ENCODE measurements at regions of chr10 and their contacts with region 1.

Region 1: GRCh38 chr10:116774728-116775151 is 32.4 kb upstream of the HSPA12A start:
- DNase-seq: no peak
- H3K4me3 ChIP-seq: no peak overlapping the region
- CTCF ChIP-seq: no peak

Region 2: DNA sequence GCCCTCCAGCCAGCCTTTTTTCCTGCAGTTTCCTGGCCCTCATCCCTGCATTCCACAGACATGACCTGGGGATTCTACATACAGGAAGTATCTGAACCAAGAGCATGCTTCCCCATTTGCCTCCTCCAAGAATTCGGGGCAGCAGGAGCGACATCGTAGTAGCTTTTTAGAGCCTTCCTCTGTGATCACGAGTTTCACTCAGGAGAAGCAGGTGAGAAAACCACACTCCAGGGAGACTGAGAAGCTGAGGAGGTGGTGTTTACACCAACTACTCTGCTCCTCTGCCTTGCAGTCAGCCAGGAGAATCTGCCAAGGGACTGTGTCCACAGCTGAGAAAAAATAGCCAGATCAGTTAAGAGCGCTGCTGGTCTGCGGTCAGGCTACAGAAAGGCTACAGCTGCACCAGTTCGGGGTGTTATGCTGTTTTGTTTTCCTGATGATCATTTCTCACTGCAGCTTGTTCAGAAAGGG is 86.5 kb before region 1 on chr10:
- in situ Hi-C with region 1: loop called (anchors 5 kb)
- DNase-seq: no peak
- H3K4me3 ChIP-seq: no peak overlapping the region
- CTCF ChIP-seq: no peak

Region 3: DNA sequence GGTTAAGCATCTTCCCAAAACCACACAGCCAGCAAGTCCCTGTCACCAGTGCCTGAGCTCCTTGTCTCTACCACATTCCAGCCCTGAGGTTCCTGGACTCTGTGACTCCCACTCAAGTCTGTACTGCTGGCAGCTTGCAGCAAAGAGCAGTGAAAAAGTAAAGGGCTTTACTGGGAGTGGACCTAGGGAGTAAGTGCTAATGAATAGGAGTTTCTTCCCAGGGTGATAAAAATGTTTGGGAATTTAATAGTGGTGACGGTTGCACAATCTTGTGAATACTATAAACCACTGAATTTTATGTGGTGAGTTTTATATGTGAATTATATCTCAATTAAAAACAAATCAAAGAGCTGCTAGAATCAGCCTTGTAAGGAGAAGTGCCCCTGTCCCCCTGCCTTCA is 54.9 kb before region 1 on chr10:
- in situ Hi-C with region 1: loop called (anchors 5 kb)
- DNase-seq: no peak
- H3K4me3 ChIP-seq: no peak overlapping the region
- CTCF ChIP-seq: no peak

Measured in astrocyte of the cerebellum (primary cell).